HEK293T (cell line): ENCODE measurements at regions of chr12 and their contacts with region 1.

Region 1: DNA sequence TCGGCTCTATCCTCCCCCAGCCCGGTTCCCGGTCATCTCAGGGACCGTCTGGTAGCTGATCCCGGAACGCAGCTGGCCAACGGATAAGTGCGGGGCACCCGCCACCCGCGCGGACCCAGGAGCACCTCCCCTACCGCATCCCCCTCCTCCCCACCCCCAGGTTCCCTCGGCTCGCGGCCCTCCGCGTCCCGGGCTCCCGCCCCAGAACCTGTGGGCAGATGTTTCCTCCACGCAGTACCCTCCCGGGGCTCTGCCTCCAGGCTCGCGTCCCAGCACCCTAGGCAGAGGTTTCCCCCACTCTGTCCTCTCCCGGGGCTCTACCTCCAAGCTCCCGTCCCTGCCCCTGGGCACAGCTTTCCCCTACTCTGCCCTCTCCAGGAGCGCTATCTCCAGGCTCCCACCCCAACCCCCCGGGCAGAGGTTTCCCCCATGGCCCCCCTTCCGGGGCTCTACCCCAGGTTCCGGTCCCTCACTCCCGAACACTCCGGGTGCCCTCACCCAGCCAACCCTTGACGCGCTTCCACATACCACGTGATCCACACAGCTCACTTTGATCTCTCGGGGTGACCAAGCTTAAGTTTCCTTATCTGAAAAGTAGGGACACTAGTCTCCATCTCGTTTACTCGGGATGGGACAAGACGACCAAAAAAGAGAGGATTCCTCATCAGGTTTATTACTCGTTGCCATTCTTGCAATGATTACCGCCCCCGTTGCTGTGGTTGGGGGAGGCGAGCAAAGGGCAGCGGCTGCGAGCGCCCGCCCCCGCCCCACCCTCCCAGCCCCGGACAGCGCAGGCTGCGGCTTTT is at the start of gene CCDC38:
- DNase-seq: peak; percentile 85

Region 2: DNA sequence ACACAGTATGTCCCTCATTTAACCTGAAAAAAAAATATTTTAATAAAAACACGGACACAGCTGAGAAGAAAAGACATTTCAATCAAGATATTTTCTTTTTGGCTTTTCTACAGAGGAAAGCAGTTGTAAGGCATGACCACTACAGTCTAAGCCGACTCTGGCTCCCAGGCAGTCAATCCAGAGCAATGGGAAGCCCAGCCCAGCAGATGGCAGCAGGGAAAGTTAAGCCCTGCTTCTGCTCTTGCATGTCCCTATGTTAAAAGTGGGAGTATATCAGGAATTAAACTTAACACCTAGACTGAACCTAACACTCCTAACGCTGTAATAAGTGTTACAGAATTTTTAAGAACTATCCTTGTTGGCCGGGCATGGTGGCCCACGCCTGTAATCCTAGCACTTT is 72.9 kb after region 1 on chr12:
- CTCF ChIA-PET with region 1: no interaction called
- POLR2A ChIA-PET with region 1: no interaction called
- DNase-seq: peak; percentile 32

Region 3: DNA sequence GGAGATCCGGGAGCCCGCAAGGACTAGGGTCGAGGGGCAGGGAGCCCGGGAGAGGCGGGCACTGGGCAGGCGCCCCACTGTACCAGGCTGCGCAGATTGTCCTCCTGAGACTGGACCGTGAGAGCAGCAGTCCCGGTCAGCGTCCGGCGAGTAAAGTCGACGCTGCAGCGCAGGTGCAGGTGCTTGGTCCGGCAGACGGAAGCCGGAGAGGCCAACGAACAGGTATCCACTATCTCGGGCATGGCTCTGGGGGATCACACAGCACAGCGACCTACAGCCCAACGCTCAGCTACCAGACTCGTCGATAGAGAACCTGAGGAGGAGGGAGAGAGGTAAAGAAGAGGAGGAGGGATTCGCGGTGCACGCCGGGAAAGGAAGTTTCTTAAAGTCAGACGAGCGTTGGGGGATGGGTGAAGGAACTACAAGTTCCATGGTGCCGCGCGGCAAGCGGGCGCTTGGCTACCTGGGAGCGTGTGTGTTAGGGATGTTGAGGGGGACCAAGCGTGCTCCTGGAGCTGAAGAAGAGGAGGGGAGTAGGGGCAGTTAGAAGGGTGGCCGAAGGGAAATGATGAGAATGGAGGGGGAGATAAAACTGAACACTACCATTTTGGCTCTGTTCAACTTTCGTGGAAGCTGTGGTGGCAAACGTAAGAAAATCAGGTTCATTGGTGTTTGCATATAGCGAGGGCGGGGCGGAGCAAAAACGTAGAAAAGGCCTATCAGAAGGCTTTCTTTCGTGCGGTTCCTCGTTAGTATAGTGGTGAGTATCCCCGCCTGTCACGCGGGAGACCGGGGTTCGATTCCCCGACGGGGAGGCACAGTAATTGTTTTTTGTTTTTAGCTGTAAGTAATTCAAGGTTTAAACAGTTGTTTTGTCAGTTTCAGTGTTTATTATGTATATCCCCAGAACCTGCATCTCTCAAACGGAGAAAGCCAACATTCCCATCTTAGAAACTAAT is 92.8 kb after region 1 on chr12 and contains the start of gene LTA4H:
- CTCF ChIA-PET with region 1: no interaction called
- POLR2A ChIA-PET with region 1: interaction called, 10 read pairs
- DNase-seq: peak; percentile 92